Sciatic nerve (tissue), 2 donors: ENCODE measurements at regions of chr15 and their contacts with region 1.

Region 1: DNA sequence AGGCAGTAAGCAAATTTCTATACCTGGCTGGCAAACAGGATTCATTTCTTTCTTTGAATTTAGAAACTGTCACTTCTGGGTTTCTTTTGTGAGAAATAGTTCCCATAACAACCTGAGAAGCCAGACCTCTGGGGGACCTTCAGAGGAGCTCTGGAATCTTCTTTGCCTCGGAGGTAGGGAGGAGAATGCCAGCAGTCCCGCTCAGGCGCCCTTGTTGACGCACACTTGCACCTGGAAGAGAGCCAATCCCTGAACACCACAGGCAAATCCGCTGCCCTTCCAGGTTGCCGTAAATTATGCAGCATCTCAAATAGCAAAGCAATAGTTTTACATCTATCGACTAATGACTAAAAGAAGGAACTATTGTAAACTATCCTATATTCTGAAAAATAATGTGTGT is 801.4 kb upstream of the ARRDC4 start:
- DNase-seq: no peak
- ATAC-seq: no peak

Region 2: GRCh38 chr15:97129674-97130073 is 29.4 kb before region 1 on chr15:
- intact Hi-C with region 1: loop called (anchors 1 kb)
- DNase-seq: no peak
- ATAC-seq: no peak